ENCODE measurements at regions of chr1 and their contacts with region 1.

Region 1: DNA sequence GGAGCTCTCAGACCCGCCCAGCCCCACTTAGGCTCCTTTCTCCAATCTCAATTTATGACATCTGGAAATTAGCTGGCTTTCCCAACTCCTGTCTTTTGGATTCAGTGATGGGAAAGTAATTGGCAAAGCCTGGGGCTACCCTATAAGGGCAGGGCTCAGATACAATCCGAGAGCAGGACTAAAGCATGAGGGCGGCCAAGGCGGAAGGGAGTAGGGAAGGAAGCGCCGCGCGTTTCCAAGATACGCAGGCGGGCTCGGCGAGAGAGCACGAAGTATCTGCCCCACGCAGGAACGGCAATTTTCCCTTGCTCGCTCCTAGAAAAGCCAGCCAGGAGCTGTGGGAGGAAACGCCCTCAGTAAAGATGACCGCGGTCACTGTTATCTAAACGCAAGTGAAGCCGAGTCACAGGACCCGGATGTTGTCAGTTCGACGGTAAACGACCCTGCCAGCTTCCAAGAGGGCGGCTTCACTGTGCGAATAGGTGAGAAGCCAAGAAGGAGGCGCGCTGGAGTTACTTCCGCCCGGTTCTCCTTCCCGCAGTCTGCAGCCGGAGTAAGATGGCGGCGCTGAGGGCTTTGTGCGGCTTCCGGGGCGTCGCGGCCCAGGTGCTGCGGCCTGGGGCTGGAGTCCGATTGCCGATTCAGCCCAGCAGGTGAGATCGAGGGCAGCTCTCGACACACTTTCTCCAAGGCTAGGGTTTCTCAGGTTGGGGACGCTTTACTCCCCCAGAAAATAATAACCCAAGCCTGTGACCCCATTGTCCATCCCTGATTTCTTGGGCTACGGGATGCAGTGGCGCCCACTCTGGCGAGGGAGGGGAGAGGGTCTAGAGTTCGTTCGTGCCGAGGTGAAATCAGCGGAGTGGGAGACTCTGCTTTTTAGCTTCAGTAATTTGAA is at the start of gene NDUFS2:
- DNase-seq: peak; percentile 93
- H3K4me3 Mint-ChIP-seq: peak within 1 kb of the TSS; percentile 96
- H3K27ac Mint-ChIP-seq: peak within 1 kb of the TSS; percentile 97
- H3K4me1 Mint-ChIP-seq: peaks cover 77% of the 10 kb centered on the region
- H3K27me3 Mint-ChIP-seq: no peaks in the 10 kb centered on the region
- total RNA-seq, gene NDUFS2: 72.9 and 84.1 TPM in 2 replicates

Region 2: DNA sequence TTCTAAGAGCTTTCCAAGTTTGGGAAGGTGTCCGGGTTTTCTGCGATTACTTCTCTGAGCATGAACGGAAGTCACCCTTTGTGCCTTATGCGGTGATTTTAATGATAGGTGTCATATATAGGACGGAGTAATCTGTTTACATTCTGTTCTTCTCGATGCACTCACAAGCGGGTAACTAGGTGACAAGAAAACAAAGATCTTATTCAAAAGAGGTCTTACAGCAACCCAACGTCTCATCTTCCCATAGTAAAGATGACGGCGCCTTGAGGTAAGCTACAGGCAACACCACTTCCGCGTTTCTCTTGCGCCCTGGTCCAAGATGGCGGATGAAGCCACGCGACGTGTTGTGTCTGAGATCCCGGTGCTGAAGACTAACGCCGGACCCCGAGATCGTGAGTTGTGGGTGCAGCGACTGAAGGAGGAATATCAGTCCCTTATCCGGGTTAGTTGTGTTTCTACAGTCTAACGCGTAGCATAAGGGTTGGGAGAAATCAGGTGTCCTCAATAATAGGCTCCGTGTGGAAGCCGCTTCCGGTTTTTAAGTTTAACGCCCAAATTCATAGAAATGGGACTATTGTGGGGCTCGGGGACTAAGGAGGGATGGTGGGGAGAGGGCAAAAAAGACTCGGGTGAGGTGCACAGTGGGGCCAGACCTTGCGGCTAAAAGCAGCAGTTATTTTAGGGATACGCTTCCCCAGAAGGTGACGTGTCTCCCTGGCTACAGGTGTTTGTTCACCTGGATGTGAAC is 48.2 kb before region 1 on chr1 and contains the start of gene UFC1:
- intact Hi-C with region 1: loop called (anchors 1 kb)
- DNase-seq: peak; percentile 80
- H3K4me3 Mint-ChIP-seq: peak within 1 kb of the TSS; percentile 99
- H3K27ac Mint-ChIP-seq: peak within 1 kb of the TSS; percentile 100
- H3K4me1 Mint-ChIP-seq: peaks cover 33% of the 10 kb centered on the region
- H3K27me3 Mint-ChIP-seq: no peaks in the 10 kb centered on the region
- total RNA-seq, gene UFC1: 86.3 and 94.5 TPM in 2 replicates

Region 3: GRCh38 chr1:161159087-161159912 is 42.8 kb before region 1 on chr1 and contains the start of gene USP21:
- intact Hi-C with region 1: loop called (anchors 2 kb)
- DNase-seq: peak; percentile 91
- H3K4me3 Mint-ChIP-seq: peak within 1 kb of the TSS; percentile 88
- H3K27ac Mint-ChIP-seq: peak within 1 kb of the TSS; percentile 86
- H3K4me1 Mint-ChIP-seq: peaks cover 64% of the 10 kb centered on the region
- H3K27me3 Mint-ChIP-seq: no peaks in the 10 kb centered on the region
- total RNA-seq, gene USP21: 32.9 and 38.2 TPM in 2 replicates

Region 4: GRCh38 chr1:161314201-161314981 is 112.3 kb after region 1 on chr1 and contains the start of gene SDHC:
- intact Hi-C with region 1: loop called (anchors 1 kb)
- DNase-seq: peak; percentile 88
- H3K4me3 Mint-ChIP-seq: peak within 1 kb of the TSS; percentile 99
- H3K27ac Mint-ChIP-seq: peak within 1 kb of the TSS; percentile 87
- H3K4me1 Mint-ChIP-seq: peaks cover 26% of the 10 kb centered on the region
- H3K27me3 Mint-ChIP-seq: peaks cover 2% of the 10 kb centered on the region
- total RNA-seq, gene SDHC: 157 and 162 TPM in 2 replicates

Measured in activated T-helper 1 cell treated with anti-CD3 and anti-CD28 coated beads, Interleukin-12 subunit alpha, Interleukin-12 subunit beta, Interleukin-2, Interleukin-4 antibody, amounts not matched to agents 30 ng/mL and 10 ng/mL and 1 ng/mL, durations not matched to agents 14 hours and 24 hours and 36 hours (primary cell).